Gastrocnemius medialis (tissue), 4 donors: ENCODE measurements at regions of chr6 and their contacts with region 1.

Region 1: DNA sequence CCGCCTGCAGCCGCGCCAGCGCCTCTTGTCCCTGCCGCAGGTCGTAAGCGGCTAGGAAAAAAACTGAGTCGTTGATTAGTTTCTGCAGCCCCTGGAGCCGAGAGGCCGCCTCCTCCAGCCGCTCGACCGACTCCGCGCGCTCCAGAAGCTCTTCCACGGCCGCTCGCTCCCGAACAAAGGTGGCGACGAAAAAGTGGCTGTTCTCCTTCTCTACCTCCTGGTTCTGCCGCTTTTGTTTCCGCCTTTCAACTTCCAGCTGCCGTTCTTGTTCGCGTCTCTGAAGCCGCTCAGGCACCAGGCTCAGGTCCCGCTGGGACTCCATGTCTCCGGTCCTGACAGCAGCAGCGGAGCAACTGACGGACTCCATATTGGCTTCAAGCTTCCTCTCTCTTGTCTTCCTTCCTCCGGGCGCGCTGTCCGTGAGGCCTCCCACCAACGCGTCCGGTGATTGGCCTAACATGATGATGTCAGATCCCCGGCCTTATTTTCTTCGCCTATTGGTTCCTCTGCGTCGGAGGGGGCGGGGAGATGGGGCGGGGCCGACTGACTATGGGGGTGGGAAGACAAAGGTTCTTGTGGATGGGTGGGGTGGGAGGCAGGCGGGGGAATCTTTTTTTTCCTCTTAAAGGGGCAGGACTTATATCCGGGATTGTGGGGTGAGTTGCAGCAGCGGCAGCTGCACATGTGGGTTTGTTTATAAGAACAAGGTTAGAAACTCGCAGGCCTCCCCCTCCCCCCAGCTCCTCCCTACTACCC is at the start of gene TBCC:
- DNase-seq: peak; percentile 99
- ATAC-seq: peak; percentile 84 to 86
- H3K4me3 ChIP-seq: peak within 1 kb of the TSS; percentile 80 to 99 (median 92)
- H3K27ac ChIP-seq: peak within 1 kb of the TSS; percentile 95 to 100 (median 97)
- H3K4me1 ChIP-seq: peaks cover 26 to 29% of the 10 kb centered on the region in 2 donors
- H3K27me3 ChIP-seq: no peaks in the 10 kb centered on the region
- CTCF ChIP-seq: no peak
- POLR2A ChIP-seq: peak; percentile 91 to 97
- total RNA-seq, gene TBCC: 33.2 to 61.8 (median 45.1) TPM

Region 2: DNA sequence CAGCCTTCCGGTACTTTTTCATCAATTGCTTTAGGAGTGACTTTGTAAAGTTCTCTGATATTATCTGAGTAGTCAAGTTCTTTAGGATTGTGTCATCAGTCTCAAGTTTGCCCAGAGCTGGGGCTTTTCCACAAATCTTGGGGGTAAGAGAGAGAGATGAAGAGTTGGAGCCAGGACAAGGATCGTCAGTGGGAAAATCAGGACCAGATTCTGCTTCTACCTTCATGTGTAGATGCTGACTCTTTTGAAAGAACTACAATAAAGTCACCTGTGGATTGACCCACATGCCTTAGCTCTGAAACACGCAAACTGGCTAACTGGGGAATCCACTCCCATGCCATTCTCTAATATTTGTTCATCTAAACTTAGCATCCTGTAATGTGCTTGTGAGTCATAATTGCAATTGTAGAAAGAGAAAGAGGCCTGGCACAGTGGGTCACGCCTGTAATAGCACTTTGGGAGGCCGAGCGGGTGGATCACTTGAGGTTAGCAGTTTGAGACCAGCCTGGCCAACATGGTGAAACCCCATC is 20.3 kb after region 1 on chr6:
- in situ Hi-C with region 1: no loop called
- intact Hi-C with region 1: loop called (anchors 2 kb)
- DNase-seq: peak; percentile 39 to 76
- ATAC-seq: peak; percentile 95 to 96
- H3K4me3 ChIP-seq: no peak overlapping the region
- H3K27ac ChIP-seq: peak overlapping the region; percentile 67 to 80 (median 72)
- H3K4me1 ChIP-seq: peaks cover 4 to 10% of the 10 kb centered on the region in 2 donors
- H3K27me3 ChIP-seq: no peaks in the 10 kb centered on the region
- CTCF ChIP-seq: no peak
- POLR2A ChIP-seq: no peak

Region 3: DNA sequence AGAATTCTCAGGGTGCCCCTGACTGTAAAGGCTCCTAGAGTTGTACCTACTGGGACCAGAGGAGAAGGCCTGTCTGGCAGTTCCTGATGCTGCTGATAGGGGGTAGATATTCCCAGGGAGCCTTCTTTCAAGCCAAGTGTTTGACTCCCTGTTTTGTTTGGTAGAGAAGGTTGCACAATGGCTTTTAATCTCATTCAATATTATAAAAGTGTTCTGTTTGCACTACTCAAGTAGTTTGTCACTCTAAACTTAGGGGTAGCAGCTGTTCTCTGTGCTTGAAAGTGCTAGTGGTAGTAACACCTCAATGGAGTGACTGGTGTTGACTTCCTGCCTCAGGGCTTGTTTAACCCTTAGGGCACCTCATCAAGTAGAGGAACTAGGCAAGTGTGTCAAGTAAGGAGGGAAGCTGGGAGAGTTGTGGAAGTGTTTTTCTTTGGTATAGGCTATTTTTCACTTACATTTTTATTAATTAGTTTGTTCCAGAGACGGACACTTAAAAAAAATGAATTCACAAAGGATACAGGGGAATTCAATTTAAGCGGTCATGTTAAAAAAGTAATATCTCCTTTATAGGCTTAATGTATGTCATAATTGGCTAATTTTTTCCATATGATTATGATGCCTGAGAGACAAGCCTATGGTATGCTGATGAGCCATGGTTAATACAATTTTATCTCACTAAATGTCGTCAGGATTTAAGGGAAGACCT is 74.1 kb after region 1 on chr6:
- in situ Hi-C with region 1: no loop called
- intact Hi-C with region 1: loop called (anchors 2 kb)
- DNase-seq: no peak
- ATAC-seq: peak; percentile 31 to 39
- H3K4me3 ChIP-seq: peak overlapping the region in 2 of 4 donors; percentile 43 to 46
- H3K27ac ChIP-seq: peak overlapping the region; percentile 77 to 94 (median 84)
- H3K4me1 ChIP-seq: peaks cover 41 to 49% of the 10 kb centered on the region in 2 donors
- H3K27me3 ChIP-seq: no peaks in the 10 kb centered on the region
- CTCF ChIP-seq: peak in 4 of 5 experiments; percentile 11 to 41 (median 28)
- POLR2A ChIP-seq: no peak

Region 4: DNA sequence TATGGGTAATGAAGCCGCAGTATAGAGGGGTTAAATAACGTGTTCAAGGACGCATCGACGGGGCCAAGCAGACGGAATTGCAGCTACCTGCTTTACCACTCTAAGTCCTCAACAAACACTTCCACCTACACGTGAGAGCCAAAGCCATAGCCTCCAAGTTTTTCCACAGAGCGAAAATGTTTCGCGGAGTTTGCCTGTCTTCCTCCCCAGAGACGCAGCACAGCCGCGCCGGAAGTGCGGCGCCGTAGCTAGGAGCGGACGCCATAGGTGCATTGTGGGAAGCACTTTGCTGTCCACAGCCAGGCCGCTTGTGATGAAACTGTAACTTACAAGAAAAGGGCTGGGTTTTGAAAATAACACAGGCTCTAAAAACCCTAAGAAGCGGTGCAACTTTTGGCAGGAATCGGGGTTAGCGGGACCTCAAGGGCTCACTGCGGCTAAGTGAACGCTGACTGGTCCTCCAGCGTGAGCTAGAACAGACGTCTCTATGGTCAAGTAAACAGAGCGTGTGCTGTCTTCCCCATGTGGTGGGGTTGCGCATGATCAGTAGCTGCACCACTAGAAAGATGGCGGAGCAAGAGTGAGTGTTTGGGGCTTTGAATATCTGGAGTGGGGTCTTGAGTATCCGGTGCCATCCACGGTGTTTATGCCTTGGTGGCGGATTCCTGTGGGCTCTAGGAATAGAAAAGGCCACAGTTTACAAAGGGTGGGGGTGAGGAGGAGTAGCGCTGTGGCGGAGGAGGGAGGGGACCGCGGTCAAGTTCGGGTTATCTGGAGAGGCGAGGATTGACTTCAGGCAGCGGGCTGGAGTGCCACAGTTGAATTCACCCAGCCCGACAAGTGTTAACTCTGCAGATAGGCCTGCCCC is 133.7 kb after region 1 on chr6 and contains the start of gene RPL7L1:
- in situ Hi-C with region 1: loop called in 2 of 4 experiments (anchors 5 to 25 kb)
- intact Hi-C with region 1: loop called (anchors 1 kb)
- DNase-seq: peak; percentile 80 to 86
- ATAC-seq: peak; percentile 96 to 99
- H3K4me3 ChIP-seq: peak within 1 kb of the TSS; percentile 75 to 92 (median 80)
- H3K27ac ChIP-seq: peak within 1 kb of the TSS; percentile 85 to 96 (median 94)
- H3K4me1 ChIP-seq: peaks cover 23 to 24% of the 10 kb centered on the region in 2 donors
- H3K27me3 ChIP-seq: no peaks in the 10 kb centered on the region
- CTCF ChIP-seq: peak in 2 of 5 experiments; percentile 20 to 41
- POLR2A ChIP-seq: peak; percentile 64 to 80
- total RNA-seq, gene RPL7L1: 59.6 to 87.1 (median 65.2) TPM

Region 5: DNA sequence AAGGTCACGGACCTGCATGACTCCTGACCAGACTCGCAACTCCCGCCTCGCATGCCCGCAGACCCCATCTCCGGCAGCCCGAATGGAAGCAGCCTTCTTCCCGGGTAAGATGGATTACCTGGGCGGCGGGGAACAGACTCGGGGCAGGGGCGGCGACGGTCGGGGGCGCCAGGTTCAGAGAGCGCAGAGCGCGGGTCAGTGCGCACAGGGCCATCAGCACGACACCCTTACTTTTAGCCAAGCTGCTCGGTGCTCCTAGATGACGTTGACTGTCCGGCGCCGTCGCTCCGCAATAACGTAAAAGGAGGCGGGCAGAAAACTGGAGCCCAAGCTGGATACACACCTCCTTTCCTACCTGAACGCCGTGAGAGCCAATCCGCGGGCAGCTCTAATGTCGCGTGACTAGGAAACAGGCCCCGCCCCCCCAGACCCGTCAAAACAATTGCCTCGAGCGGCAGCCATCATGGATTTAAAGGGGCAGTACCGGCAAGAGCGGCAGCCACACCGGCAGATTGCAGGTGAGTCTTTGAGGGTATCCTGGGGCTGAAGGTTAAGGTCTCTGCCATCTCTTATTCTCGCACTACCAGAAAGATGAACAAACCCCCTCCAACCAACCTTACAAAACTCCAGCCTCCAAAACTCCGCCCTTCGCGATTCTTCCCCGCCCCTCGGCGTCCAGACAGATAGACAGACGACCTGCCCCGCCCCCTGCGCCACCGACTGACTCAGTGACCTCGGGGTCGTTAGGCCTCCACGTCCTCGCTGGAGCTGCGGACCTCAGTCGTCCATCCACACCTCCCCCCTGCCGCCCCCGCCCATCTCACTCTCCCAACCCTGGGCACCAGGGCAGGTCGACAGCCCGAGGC is 313.5 kb after region 1 on chr6 and contains the starts of genes KLC4 and MRPL2:
- in situ Hi-C with region 1: no loop called
- intact Hi-C with region 1: loop called (anchors 10 kb)
- DNase-seq: peak; percentile 99
- ATAC-seq: peak; percentile 94 to 97
- H3K4me3 ChIP-seq: peak within 1 kb of the TSS; percentile 87 to 98 (median 92)
- H3K27ac ChIP-seq: peak within 1 kb of the TSS; percentile 90 to 99 (median 95)
- H3K4me1 ChIP-seq: peaks cover 24 to 30% of the 10 kb centered on the region in 2 donors
- H3K27me3 ChIP-seq: no peaks in the 10 kb centered on the region
- CTCF ChIP-seq: no peak
- POLR2A ChIP-seq: peak; percentile 72 to 88
- total RNA-seq, gene KLC4: 12.2 to 19.3 (median 14.6) TPM
- total RNA-seq, gene MRPL2: 34.1 to 64.9 (median 41.1) TPM